Right ventricle myocardium inferior (tissue), 1 donor: ENCODE measurements at regions of chr12 and their contacts with region 1.

Region 1: GRCh38 chr12:105141320-105141918 is 33.9 kb downstream of the WASHC4 start:
- DNase-seq: no peak
- ATAC-seq: no peak

Region 2: DNA sequence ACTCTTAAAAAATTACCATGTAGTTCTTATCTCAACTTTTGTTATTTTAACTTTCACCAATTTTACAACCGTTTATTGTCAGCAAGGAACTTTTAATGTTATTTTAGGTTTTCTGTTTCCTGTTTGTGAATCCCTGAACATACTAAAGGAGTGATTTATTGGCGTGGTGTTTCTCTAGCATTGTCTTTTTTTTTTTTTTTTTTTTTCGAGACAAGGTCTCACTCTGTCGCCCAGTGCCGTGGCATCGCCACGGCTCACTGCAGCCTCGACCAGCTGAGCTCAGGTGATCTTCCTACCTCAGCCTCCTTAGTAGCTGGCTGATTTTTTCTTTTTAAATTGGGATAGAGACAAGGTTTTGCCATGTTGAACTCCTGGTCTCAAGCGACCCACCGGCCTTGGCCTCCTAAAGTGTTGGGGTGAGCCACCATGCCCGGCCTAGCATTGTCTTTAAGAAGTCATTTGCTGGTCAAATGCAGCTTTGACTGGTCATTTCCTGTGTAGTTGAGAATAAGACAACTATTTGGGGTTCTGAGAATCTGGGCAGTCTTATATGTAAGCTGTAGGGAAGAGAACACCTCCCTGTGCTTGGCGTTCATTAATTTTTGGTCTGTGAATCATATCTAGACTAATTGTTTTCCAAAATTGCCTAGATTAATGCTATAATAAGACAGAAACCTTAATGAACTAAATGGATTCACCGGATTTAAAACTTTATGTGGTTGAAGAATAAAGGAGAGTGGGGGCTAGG is 31.8 kb before region 1 on chr12:
- intact Hi-C with region 1: loop called (anchors 5 kb)
- DNase-seq: no peak
- ATAC-seq: no peak

Region 3: GRCh38 chr12:105190530-105190929 is 49.1 kb after region 1 on chr12:
- intact Hi-C with region 1: no loop called
- DNase-seq: peak; percentile 70
- ATAC-seq: no peak

Region 4: DNA sequence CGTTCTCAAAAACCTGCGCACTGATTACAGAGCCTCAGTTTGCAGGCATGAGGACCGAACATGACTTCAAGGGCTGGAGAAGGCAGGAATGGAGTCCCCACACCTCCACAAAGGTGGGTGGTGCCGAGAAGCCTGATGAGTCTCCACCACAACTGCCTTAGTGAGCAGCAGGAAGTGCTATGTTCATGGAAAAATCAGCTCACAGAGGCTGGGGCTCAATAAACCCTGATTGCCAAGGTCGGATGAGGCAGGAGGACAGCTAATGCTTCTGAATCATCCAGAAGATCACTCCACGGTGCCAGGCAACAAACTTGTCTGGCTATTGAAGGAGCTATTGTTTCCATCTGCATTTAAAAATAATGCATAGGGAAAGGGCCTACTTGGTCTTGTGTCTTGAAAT is 63.5 kb after region 1 on chr12:
- intact Hi-C with region 1: no loop called
- DNase-seq: no peak
- ATAC-seq: no peak